Activated CD4-positive, alpha-beta memory T cell treated with anti-CD3 and anti-CD28 coated beads for 36 hours (primary cell): ENCODE measurements at regions of chr1 and their contacts with region 1.

Region 1: DNA sequence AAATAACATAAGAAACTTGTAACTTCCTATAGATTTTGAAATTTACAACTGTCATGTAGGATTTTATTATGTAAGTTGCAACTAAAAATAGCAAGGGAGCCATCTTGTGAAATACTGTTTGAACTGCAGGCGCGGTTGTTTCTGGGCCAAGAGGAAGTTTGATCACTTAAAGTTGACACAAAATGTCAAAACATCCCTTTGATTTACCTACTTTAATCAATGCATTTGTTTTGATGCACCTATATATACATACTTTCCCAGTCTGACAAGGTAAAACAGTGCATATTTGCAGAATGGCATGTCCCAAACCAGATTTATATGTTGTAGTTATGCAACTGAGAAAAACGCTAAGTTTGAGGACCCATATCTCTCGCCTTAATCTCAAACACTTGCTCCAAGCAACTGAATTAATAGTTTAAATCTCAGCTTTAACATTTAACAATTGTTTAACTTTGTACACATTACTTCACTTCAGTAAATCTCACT is 63.8 kb downstream of the KCNK2 start:
- DNase-seq: peak; percentile 10
- H3K4me3 Mint-ChIP-seq: no peak overlapping the region
- H3K27ac Mint-ChIP-seq: no peak overlapping the region
- H3K4me1 Mint-ChIP-seq: no peaks in the 10 kb centered on the region
- H3K27me3 Mint-ChIP-seq: no peaks in the 10 kb centered on the region

Region 2: GRCh38 chr1:214632091-214632490 is 514.3 kb before region 1 on chr1:
- CTCF ChIA-PET with region 1: no interaction called
- POLR2A ChIA-PET with region 1: no interaction called
- intact Hi-C with region 1: loop called (anchors 1 kb)
- DNase-seq: peak; percentile 23
- H3K4me3 Mint-ChIP-seq: no peak overlapping the region
- H3K27ac Mint-ChIP-seq: no peak overlapping the region
- H3K4me1 Mint-ChIP-seq: peaks cover 20% of the 10 kb centered on the region
- H3K27me3 Mint-ChIP-seq: no peaks in the 10 kb centered on the region